ENCODE measurements at regions of chrX and their contacts with region 1.

Region 1: GRCh38 chrX:151753313-151754041 is 18.9 kb downstream of the CNGA2 start:
- DNase-seq: peak; percentile 49 to 69 (median 60)
- ATAC-seq: peak; percentile 86
- H3K4me3 ChIP-seq: no peak overlapping the region
- H3K27ac ChIP-seq: no peak overlapping the region
- H3K4me1 ChIP-seq: peaks cover 10% of the 10 kb centered on the region
- H3K27me3 ChIP-seq: no peaks in the 10 kb centered on the region
- CTCF ChIP-seq: peak; percentile 53 to 92 (median 83)
- POLR2A ChIP-seq: no peak

Region 2: GRCh38 chrX:152635941-152636340 is 882.5 kb after region 1 on chrX:
- intact Hi-C with region 1: loop called (anchors 5 kb)
- DNase-seq: peak; percentile 32 to 55 (median 36)
- ATAC-seq: no peak
- H3K4me3 ChIP-seq: no peak overlapping the region
- H3K27ac ChIP-seq: no peak overlapping the region
- H3K4me1 ChIP-seq: no peaks in the 10 kb centered on the region
- H3K27me3 ChIP-seq: no peaks in the 10 kb centered on the region
- CTCF ChIP-seq: peak in 6 of 7 experiments; percentile 22 to 62 (median 48)
- POLR2A ChIP-seq: no peak